A673 (cell line): ENCODE measurements at regions of chr18 and their contacts with region 1.

Region 1: DNA sequence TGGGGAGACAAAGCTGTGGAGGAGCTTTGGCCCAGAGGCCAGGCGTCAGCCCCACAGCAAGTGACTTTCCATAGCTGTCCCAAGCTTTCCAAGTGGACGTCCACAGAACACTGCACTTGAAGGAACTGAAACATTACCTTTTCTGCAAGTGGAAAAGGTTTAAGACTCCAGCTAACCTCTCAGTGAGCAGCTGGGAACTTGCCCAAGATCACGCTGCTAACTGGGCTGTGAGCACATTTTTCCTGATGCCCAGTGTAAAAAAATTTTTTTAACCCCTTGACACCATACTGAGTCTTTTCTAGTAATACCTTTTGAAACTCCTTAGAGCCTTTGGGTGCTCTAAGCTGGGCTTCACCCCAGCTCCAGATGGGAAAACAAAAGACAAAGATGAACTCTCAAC is 256.7 kb downstream of the HAUS1 start:
- DNase-seq: no peak
- H3K4me3 ChIP-seq: no peak overlapping the region
- H3K27ac ChIP-seq: no peak overlapping the region
- H3K4me1 ChIP-seq: peaks cover 16% of the 10 kb centered on the region
- H3K27me3 ChIP-seq: no peaks in the 10 kb centered on the region
- CTCF ChIP-seq: no peak

Region 2: DNA sequence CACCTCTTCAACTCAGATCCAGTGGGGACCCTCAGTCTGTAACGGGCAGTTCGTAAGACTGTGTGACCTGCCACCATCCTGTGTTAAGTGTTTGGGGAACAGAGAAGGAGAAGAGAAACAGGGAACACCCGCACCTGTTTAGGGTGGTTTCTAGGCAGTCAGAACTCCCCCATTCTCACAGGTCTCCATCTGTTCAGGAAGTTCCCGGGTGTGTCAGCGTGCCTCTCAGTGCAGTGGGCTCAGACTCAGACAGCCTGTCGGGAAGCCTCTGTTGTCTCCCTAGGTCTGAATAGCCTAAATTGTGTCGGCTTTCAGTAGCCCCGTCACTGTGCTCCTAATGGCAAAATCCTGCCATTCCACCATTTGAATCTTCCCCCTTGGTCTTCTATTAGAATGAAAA is 39.6 kb after region 1 on chr18:
- CTCF ChIA-PET with region 1: no interaction called
- POLR2A ChIA-PET with region 1: no interaction called
- intact Hi-C with region 1: loop called (anchors 2 kb)
- DNase-seq: no peak
- H3K4me3 ChIP-seq: no peak overlapping the region
- H3K27ac ChIP-seq: no peak overlapping the region
- H3K4me1 ChIP-seq: no peaks in the 10 kb centered on the region
- H3K27me3 ChIP-seq: no peaks in the 10 kb centered on the region
- CTCF ChIP-seq: no peak

Region 3: GRCh38 chr18:46555724-46556123 is 194.9 kb after region 1 on chr18:
- CTCF ChIA-PET with region 1: no interaction called
- POLR2A ChIA-PET with region 1: no interaction called
- intact Hi-C with region 1: no loop called
- DNase-seq: peak; percentile 41
- H3K4me3 ChIP-seq: no peak overlapping the region
- H3K27ac ChIP-seq: no peak overlapping the region
- H3K4me1 ChIP-seq: no peaks in the 10 kb centered on the region
- H3K27me3 ChIP-seq: no peaks in the 10 kb centered on the region
- CTCF ChIP-seq: peak; percentile 56